ENCODE measurements at regions of chr5 and their contacts with region 1.

Region 1: GRCh38 chr5:1011226-1011631 is 2.6 kb downstream of the NKD2 start:
- DNase-seq: peak; percentile 38
- ATAC-seq: peak; percentile 53
- H3K4me3 ChIP-seq: no peak overlapping the region
- H3K27ac ChIP-seq: no peak overlapping the region
- H3K4me1 ChIP-seq: peaks cover 33% of the 10 kb centered on the region
- H3K27me3 ChIP-seq: peaks cover 4 to 28% of the 10 kb centered on the region in 2 experiments; a peak in 4 of 5 replicates
- CTCF ChIP-seq: peak; percentile 68
- EP300 ChIP-seq: no peak
- POLR2A ChIP-seq: no peak
- RAD21 ChIP-seq: no peak

Region 2: GRCh38 chr5:989961-990530 is 21.2 kb before region 1 on chr5:
- CTCF ChIA-PET with region 1: no interaction called
- POLR2A ChIA-PET with region 1: interaction called, 4 read pairs
- in situ Hi-C with region 1: no loop called
- intact Hi-C with region 1: loop called (anchors 2 kb)
- DNase-seq: no peak
- ATAC-seq: peak; percentile 61
- H3K4me3 ChIP-seq: no peak overlapping the region
- H3K27ac ChIP-seq: no peak overlapping the region
- H3K4me1 ChIP-seq: peaks cover 23% of the 10 kb centered on the region
- H3K27me3 ChIP-seq: peaks cover 0 to 12% of the 10 kb centered on the region in 2 experiments; a peak in 2 of 5 replicates
- CTCF ChIP-seq: peak; percentile 70
- EP300 ChIP-seq: no peak
- POLR2A ChIP-seq: no peak
- RAD21 ChIP-seq: 0 out of 2 replicates have a peak, but pooled peaks have one; percentile 35

Region 3: DNA sequence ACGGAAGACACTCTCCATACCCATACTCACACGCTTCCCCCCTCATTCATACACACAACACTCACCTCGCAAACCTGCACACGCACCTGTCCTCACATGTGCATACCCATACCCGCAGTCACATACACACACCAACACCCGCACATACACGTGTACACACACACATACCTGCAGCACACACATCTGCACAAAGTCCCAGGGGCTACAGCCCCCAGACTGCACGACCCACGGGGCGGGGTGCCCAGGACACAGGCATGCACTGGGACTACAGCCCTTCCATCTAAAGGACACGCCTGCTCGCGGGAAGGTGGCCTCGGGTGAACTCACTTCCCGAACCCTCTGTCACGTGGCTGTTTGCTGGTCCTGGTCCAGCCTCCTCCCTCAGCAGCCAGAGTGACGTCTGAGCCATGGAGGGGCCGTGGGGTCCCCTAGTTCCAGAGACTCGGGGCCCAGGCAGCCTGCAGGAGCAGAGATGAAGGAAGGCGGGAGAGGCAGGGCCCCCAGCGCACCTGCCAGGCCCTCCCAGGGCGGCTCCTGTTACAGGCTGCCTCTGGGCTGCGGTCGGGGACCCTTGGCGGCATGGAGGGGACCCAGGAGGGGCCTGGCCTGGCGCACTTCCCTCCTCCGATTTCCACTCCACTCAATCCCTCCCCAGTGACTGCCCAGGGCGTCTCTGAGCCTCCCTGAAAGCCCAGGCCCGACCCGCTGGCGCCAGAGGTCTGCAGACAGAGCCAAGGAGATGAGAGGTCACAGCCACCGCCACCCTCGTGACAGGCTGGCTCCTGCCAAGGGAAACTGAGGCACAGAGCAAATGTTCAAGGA is 92.5 kb after region 1 on chr5:
- CTCF ChIA-PET with region 1: no interaction called
- POLR2A ChIA-PET with region 1: no interaction called
- in situ Hi-C with region 1: no loop called
- intact Hi-C with region 1: no loop called
- DNase-seq: peak; percentile 47
- ATAC-seq: no peak
- H3K4me3 ChIP-seq: peak overlapping the region; percentile 15 to 82 (median 36); a peak in 4 of 6 replicates
- H3K27ac ChIP-seq: peak overlapping the region; percentile 26
- H3K4me1 ChIP-seq: peaks cover 71% of the 10 kb centered on the region
- H3K27me3 ChIP-seq: no peaks in the 10 kb centered on the region; a peak in 1 of 5 replicates
- CTCF ChIP-seq: no peak
- EP300 ChIP-seq: no peak
- POLR2A ChIP-seq: peak in 1 of 2 experiments; percentile 20; a peak in 1 of 4 replicates
- RAD21 ChIP-seq: no peak